ENCODE measurements at regions of chr19 and their contacts with region 1.

Region 1: DNA sequence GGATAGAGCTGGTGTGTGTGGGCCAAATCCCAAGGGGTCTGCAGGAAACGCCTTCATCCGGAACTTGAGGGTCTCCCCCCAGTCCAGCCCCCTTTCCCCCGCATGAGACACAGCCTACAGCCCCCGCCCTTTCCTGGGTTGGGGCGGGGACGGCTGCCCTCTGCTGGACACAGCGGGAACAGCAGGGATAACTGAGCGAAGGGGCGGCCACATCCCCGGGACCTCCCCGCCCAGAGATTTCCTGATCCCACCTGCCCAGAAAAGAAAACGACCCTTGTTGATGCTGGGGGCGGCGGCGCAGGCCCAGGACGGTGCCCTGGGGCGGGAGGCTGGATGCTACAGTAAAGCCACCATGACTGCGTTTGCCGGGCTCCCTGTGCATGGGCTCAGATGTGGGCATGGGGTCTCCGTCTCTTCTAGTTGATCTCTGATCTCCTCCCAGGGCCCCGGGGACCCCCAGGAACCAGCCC is 14.2 kb downstream of the ONECUT3 start:
- DNase-seq: peak in 1 of 2 donors; percentile 45
- ATAC-seq: peak; percentile 67

Region 2: GRCh38 chr19:1540365-1540925 is 227.1 kb before region 1 on chr19:
- intact Hi-C with region 1: loop called in 1 of 2 experiments (anchors 10 kb)
- DNase-seq: no peak
- ATAC-seq: no peak

Region 3: DNA sequence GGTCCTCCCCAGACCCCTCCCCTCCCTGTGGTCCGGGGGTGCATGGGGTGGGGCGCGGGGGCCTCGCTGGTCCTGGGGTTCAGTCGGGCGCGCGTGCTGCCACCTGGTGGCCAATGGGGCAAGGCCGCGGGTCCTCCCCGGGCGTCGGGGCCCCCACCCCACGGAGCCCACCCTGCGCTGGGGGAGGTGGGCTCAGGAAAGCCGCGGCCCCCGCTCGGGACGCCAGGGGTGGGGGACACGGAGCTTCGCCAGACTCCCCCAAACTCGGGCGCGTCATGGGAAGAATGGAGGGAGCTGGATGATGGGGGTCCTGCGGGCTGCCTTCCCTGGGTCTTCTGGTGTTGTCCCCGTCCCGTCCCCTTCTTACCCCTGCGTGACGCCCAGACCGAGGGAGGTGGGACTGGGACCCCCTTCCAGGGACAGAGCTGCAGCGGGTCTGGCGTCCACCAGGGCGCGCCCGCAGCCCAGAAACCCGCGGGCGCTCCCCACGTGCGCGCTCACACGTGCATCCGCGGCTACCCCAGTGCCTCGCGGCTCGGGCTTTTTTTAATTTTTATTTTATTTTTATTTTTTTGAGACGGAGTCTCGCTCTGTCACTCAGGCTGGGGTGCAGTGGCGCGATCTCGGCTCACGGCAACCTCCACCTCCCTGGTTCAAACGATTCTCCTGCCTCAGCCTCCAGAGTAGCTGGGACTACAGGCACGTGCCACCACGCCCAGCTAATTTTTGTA is 95.3 kb before region 1 on chr19:
- intact Hi-C with region 1: loop called (anchors 10 kb)
- DNase-seq: peak in 1 of 2 donors; percentile 67
- ATAC-seq: peak; percentile 87

Region 4: DNA sequence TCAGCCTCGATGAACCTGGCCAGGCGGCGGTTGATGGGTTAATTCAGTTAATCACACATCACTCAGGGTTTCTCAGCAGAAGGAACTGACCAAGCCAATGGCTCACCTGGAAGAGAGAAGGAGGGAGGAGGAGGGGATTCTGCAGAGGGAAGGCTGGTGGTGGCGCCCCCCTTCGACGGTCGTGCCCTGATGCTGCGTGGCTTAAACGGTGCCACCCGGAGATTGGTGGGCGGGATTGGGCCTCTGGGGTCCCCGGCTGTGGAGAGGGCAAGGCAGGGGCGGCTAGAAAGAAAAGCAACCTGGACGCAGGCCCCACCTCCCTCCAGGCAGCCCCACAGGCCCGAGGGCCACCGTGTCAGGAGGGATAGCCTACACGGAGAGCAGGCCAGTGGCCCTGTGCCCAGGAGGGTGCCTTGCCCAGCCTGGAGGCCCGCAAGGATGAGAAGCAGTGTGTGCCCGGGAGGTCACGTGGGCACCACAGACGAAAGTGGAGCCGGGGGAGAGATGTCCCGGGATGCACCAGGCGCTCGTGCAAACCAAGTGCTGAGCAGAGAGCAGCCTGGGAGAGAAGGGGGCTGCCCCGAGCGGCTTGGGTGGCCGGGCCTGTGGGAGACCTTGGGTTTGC is 189.5 kb after region 1 on chr19:
- intact Hi-C with region 1: no loop called
- DNase-seq: peak in 1 of 2 donors; percentile 70
- ATAC-seq: peak; percentile 14

Measured in left colon (tissue), 2 donors.